Activated CD4-positive, alpha-beta memory T cell treated with anti-CD3 and anti-CD28 coated beads for 36 hours (primary cell): ENCODE measurements at regions of chr5 and their contacts with region 1.

Region 1: DNA sequence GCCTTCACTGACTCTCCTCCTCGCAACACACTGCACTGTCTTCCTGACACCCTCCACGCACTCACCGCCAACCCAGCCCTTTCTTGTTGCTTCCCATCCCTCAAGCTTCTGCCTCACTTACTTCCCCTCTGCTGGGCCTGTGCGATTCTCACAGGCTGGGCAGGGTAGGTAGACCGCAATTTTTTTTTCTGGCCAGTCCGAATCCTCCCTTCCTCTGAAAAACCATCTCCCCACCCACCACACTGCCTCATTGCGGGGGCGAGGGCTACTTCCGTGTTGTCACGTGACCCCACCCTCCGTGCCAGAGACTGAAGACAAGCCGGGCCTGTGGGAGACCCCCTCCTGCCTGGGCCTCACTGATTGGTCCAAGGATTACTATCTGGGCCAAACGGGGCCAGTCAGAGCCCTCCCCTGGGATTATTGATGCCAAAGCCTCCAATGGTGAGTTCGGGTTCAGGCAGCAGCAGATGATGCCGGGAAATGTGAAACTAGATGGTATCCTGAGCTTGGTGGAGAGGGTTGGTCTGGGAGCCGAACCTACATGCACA is 73.1 kb downstream of the STK10 start:
- DNase-seq: peak; percentile 95
- H3K4me3 Mint-ChIP-seq: peak overlapping the region; percentile 83
- H3K27ac Mint-ChIP-seq: peak overlapping the region; percentile 99
- H3K4me1 Mint-ChIP-seq: peaks cover 73% of the 10 kb centered on the region
- H3K27me3 Mint-ChIP-seq: no peaks in the 10 kb centered on the region

Region 2: DNA sequence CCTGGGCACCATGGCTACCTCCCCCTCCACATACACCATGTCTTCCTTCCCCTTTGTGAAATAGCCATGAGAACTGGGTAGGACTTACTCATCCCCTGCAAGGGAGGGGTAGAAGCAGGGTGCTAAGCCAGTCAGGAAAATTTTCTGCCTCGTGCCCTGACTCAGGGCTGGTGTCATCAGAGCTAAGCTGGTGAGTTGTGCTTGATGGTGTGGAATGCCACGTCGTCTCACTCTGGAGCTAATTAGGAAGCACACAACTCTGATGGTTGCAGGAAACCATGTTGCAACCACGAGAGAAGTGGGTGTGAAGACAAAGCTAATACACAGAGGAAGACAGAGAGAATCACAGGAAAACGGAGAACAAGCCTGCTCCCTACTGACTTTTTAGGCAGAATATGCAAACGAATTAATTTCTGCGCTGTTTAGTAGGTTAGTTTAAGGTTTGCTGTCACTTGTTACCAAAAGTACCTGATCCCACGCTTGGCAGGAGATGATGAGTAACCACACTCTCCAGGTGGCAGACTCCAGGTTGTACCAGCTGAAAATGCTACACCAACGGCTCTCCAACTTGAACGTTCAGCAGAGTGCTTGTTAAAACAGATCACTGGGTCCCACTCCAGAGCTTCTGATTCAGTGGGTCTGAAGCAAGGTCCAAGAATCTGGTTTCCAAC is 18.5 kb after region 1 on chr5:
- CTCF ChIA-PET with region 1: interaction called, 3 read pairs
- POLR2A ChIA-PET with region 1: interaction called, 7 read pairs
- intact Hi-C with region 1: loop called (anchors 1 kb)
- DNase-seq: peak; percentile 85
- H3K4me3 Mint-ChIP-seq: peak overlapping the region; percentile 43
- H3K27ac Mint-ChIP-seq: peak overlapping the region; percentile 92
- H3K4me1 Mint-ChIP-seq: peaks cover 64% of the 10 kb centered on the region
- H3K27me3 Mint-ChIP-seq: no peaks in the 10 kb centered on the region

Region 3: DNA sequence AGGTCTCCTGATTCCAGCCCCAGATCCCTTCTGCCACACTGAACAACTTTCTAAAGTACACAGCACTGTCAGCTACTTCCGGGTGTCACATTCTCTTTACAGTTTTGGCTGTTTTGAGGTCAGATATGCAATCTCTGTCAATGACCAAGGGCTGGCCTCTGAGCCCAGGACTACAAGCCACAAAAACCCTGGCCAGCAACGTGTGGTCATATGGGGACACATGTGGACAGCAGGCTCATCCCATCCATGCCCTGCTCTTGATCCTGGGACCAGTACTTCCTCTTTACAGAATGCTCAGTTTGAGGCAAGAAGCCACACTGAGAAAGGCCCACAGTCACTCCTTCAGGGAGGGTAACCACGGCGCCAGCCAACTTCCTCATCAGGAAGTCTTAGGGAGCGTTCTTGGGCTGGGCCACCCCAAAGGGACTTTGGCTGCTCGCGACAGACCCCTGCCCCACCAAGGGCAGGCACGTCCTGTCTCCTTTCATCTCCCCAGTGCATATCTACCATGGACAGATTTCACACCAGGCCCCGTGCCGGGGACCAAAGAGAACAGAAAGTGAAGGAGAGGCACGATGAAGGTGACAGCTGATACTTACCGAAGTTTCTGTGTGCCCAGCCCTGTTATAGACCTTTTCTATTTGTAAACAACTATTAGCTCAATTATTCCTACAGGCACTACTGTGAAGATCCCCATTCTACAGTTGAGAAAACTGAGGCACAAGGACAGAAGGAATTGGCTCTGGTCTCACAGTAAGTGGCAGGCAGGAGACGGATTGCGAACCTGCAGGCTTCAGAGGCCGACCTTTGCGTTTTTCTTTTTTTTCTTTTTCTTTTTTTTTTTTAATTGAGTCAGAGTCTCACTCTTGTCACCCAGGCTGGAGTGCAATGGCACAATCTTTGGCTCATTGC is 35.8 kb after region 1 on chr5:
- CTCF ChIA-PET with region 1: interaction called, 3 read pairs
- POLR2A ChIA-PET with region 1: interaction called, 3 read pairs
- intact Hi-C with region 1: loop called (anchors 1 kb)
- DNase-seq: peak; percentile 38
- H3K4me3 Mint-ChIP-seq: peak overlapping the region; percentile 64
- H3K27ac Mint-ChIP-seq: peak overlapping the region; percentile 91
- H3K4me1 Mint-ChIP-seq: peaks cover 81% of the 10 kb centered on the region
- H3K27me3 Mint-ChIP-seq: no peaks in the 10 kb centered on the region

Region 4: GRCh38 chr5:172479044-172479783 is 364.3 kb after region 1 on chr5:
- CTCF ChIA-PET with region 1: no interaction called
- POLR2A ChIA-PET with region 1: no interaction called
- intact Hi-C with region 1: no loop called
- DNase-seq: peak; percentile 77
- H3K4me3 Mint-ChIP-seq: no peak overlapping the region
- H3K27ac Mint-ChIP-seq: no peak overlapping the region
- H3K4me1 Mint-ChIP-seq: no peaks in the 10 kb centered on the region
- H3K27me3 Mint-ChIP-seq: peaks cover 3% of the 10 kb centered on the region